ENCODE measurements at regions of chr17 and their contacts with region 1.

Region 1: GRCh38 chr17:40417609-40418427 is at the start of gene TOP2A:
- DNase-seq: peak; percentile 96 to 98
- H3K4me3 ChIP-seq: peak within 1 kb of the TSS; percentile 93
- H3K27ac ChIP-seq: no peak within 1 kb of the TSS
- H3K4me1 ChIP-seq: peaks cover 33% of the 10 kb centered on the region
- H3K27me3 ChIP-seq: no peaks in the 10 kb centered on the region
- CTCF ChIP-seq: no peak
- total RNA-seq, gene TOP2A: 156 and 235 TPM in 2 replicates

Region 2: GRCh38 chr17:40317880-40318829 is 99.7 kb before region 1 on chr17:
- CTCF ChIA-PET with region 1: no interaction called
- POLR2A ChIA-PET with region 1: no interaction called
- intact Hi-C with region 1: loop called (anchors 5 kb)
- DNase-seq: peak; percentile 88 to 90
- H3K4me3 ChIP-seq: peak overlapping the region; percentile 99
- H3K27ac ChIP-seq: peak overlapping the region; percentile 75
- H3K4me1 ChIP-seq: peaks cover 85% of the 10 kb centered on the region
- H3K27me3 ChIP-seq: no peaks in the 10 kb centered on the region
- CTCF ChIP-seq: no peak

Measured in PC-9 (cell line).